ENCODE measurements at regions of chr13 and their contacts with region 1.

Region 1: DNA sequence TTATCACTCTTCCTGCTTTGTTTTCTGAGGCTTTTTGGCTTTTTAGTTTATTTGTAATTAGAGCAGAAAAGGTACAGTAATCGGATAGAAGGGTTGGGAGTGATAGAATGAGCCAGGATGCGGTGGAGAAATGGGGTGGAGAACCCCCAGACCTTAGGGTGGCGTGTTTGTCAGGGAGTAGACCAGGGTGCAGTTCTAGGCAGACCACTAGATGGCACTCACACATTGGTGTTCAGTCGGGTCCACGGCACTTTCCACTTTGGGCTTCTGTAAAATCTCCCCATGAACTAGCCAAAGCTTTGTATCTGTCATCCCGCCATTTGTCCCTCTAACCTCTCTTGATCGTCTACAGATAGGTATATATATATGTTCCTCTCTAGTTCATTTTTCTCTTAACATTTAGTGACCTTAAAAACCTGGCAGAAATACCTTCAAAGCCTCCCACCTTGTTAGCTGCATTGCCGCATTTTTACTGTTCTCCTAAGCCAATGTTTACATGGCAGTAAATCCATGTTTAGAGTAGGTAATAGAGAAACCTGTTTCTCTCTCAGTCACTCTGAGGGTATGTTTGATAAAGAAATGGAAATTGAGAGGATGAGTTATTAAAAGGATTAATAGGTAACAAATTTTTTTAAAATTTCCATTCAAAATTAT is 154.9 kb downstream of the TM9SF2 start:
- DNase-seq: peak; percentile 88
- H3K4me3 Mint-ChIP-seq: no peak overlapping the region
- H3K27ac Mint-ChIP-seq: peak overlapping the region; percentile 38
- H3K4me1 Mint-ChIP-seq: peaks cover 42% of the 10 kb centered on the region
- H3K27me3 Mint-ChIP-seq: no peaks in the 10 kb centered on the region

Region 2: GRCh38 chr13:99442273-99442895 is 213.8 kb before region 1 on chr13:
- CTCF ChIA-PET with region 1: interaction called, 7 read pairs
- POLR2A ChIA-PET with region 1: no interaction called
- intact Hi-C with region 1: loop called (anchors 1 kb)
- DNase-seq: peak; percentile 58
- H3K4me3 Mint-ChIP-seq: no peak overlapping the region
- H3K27ac Mint-ChIP-seq: no peak overlapping the region
- H3K4me1 Mint-ChIP-seq: peaks cover 13% of the 10 kb centered on the region
- H3K27me3 Mint-ChIP-seq: peaks cover 8% of the 10 kb centered on the region

Region 3: GRCh38 chr13:99585609-99586008 is 70.6 kb before region 1 on chr13:
- CTCF ChIA-PET with region 1: no interaction called
- POLR2A ChIA-PET with region 1: no interaction called
- intact Hi-C with region 1: no loop called
- DNase-seq: no peak
- H3K4me3 Mint-ChIP-seq: no peak overlapping the region
- H3K27ac Mint-ChIP-seq: no peak overlapping the region
- H3K4me1 Mint-ChIP-seq: peaks cover 2% of the 10 kb centered on the region
- H3K27me3 Mint-ChIP-seq: no peaks in the 10 kb centered on the region

Region 4: GRCh38 chr13:99859178-99860177 is 203.3 kb after region 1 on chr13:
- CTCF ChIA-PET with region 1: interaction called, 14 read pairs
- POLR2A ChIA-PET with region 1: no interaction called
- intact Hi-C with region 1: loop called (anchors 1 kb)
- DNase-seq: peak; percentile 88
- H3K4me3 Mint-ChIP-seq: no peak overlapping the region
- H3K27ac Mint-ChIP-seq: peak overlapping the region; percentile 41
- H3K4me1 Mint-ChIP-seq: peaks cover 15% of the 10 kb centered on the region
- H3K27me3 Mint-ChIP-seq: peaks cover 14% of the 10 kb centered on the region

Region 5: DNA sequence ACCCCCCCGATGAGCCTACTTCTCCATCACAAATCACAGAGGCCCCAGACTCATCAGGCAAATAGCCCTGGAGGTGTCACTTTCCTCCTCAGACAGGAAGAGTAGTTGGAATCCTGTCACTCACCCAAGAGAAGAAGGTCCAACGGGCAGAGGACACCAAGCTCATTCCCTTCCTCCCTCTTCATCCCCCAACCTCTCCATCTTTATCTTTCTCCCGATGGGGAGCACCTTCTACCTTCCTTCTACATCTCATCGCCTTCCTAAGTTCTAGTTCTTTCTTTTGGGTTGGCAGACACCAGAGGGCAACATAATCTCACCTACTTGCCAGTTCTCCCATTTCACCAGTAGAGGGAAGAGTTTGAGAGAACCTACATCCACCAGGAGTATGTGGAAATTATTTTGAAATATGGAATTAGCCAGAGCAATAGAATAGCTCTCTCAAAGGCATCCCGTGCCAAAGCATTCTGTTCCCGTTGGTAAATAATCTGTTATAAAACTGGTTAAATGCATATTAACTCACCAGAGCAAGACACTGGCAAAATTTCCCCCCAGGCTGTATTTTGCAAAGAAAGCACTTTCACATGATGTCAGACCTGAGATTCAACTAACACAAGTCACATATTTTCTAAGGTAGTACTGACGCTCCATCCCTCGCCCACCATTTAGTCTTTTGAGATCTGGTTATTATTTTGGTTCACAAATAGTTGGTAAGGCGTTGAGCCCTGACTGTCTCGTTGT is 260.3 kb after region 1 on chr13:
- CTCF ChIA-PET with region 1: interaction called, 7 read pairs
- POLR2A ChIA-PET with region 1: no interaction called
- intact Hi-C with region 1: loop called (anchors 1 kb)
- DNase-seq: no peak
- H3K4me3 Mint-ChIP-seq: no peak overlapping the region
- H3K27ac Mint-ChIP-seq: no peak overlapping the region
- H3K4me1 Mint-ChIP-seq: peaks cover 19% of the 10 kb centered on the region
- H3K27me3 Mint-ChIP-seq: peaks cover 5% of the 10 kb centered on the region

Region 6: DNA sequence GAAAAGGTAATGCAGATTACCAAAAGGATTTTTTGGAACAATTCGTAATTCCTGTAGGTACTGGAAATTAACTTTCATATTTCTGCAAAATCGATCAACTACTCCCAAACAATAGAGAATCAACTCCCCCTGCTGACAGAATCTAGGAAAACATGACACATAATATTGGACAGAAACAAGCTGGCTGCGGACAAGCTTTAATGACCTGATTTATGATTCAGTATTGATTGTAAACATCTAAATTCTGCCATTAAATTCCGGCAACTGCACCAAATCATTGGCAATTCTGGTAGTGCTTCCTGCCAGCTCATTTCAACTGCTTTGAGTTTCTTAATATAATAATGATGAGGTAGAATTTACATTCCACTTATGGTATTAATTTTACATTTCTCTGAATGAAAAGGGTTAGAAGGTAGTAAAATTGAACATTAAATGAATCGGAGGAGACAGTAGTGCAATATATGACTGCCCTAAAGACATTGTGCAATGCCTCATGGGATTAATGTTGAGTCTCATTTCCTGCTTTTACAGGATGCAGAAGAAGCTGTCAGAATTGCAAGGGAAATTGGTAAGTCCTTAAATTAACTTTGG is 579.2 kb after region 1 on chr13:
- CTCF ChIA-PET with region 1: interaction called, 18 read pairs
- POLR2A ChIA-PET with region 1: no interaction called
- intact Hi-C with region 1: loop called (anchors 1 kb)
- DNase-seq: no peak
- H3K4me3 Mint-ChIP-seq: no peak overlapping the region
- H3K27ac Mint-ChIP-seq: no peak overlapping the region
- H3K4me1 Mint-ChIP-seq: peaks cover 4% of the 10 kb centered on the region
- H3K27me3 Mint-ChIP-seq: no peaks in the 10 kb centered on the region

Region 7: DNA sequence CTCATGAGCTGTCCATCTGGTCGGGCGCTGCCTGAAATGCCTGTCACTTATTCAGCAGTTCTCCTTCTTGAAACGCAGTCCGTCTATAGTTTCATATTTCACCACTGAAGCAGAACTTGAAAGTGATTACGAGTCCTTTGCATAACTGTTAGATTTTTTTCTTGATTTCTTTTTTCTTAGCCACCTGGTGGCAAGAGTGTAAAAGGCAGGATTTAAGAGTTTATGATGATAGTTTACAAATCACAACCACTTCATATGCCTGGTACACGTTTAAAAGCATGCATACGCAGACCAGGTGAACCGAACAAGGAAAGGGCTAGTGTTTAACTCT is 886.6 kb after region 1 on chr13:
- CTCF ChIA-PET with region 1: interaction called, 9 read pairs
- POLR2A ChIA-PET with region 1: no interaction called
- intact Hi-C with region 1: loop called (anchors 1 kb)
- DNase-seq: peak; percentile 20
- H3K4me3 Mint-ChIP-seq: no peak overlapping the region
- H3K27ac Mint-ChIP-seq: no peak overlapping the region
- H3K4me1 Mint-ChIP-seq: peaks cover 27% of the 10 kb centered on the region
- H3K27me3 Mint-ChIP-seq: no peaks in the 10 kb centered on the region

Measured in activated CD4-positive, alpha-beta memory T cell treated with anti-CD3 and anti-CD28 coated beads for 36 hours (primary cell).